ENCODE measurements at regions of chr19 and their contacts with region 1.

Region 1: GRCh38 chr19:55080968-55081772 is 5.5 kb downstream of the EPS8L1 start:
- DNase-seq: peak; percentile 70 to 96 (median 79)
- ATAC-seq: peak; percentile 93
- H3K4me3 ChIP-seq: peak overlapping the region; percentile 53
- H3K4me3 Mint-ChIP-seq: peak overlapping the region; percentile 78 to 92 (median 86)
- H3K27ac ChIP-seq: peak overlapping the region; percentile 2
- H3K27ac Mint-ChIP-seq: peak overlapping the region in 6 of 9 donors; percentile 56 to 96 (median 66)
- H3K4me1 ChIP-seq: peaks cover 10 to 15% of the 10 kb centered on the region in 2 donors
- H3K4me1 Mint-ChIP-seq: peaks cover 12 to 30% (median 20%) of the 10 kb centered on the region in 7 donors
- H3K27me3 ChIP-seq: peaks cover 0 to 12% of the 10 kb centered on the region in 2 donors
- H3K27me3 Mint-ChIP-seq: peaks cover 38 to 47% (median 46%) of the 10 kb centered on the region in 5 donors

Region 2: DNA sequence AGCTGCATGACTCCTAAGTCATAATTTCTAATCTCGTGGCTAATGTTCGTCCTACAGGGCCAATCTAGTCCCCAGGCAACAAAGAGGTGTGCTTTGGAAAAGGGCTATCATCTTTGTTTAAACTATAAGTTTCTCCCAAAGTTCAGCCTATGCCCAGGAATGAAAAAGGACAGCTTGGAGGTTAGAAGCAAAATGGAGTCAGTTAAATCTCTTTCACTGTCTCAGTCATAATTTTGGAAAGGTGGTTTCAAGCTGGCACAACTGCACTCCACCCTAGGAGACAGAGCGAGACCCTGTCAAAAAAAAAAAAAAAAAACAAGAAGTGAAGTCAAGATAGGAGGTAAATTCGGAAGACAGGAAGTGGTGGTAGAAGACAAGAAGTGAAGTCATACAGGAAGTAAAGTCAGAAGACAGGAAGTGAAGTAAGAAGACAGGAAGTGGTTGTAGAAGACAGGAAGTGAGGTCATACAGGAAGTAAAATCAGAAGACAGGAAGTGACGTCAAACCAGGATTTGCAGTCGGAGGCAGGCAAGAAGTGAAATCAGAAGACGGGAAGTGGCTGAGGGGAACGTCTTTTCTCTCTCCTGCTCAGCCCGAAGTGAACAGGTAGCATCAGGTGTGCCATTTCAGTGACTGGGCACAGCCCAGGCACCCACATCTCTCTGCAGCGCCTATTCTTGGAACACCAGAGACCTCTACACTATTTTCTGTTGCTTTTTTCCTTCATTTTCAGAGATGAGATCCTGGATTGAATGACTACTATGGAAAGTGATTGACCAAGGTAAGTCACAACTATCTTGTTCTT is 75.3 kb before region 1 on chr19:
- CTCF ChIA-PET with region 1: no interaction called
- POLR2A ChIA-PET with region 1: no interaction called
- intact Hi-C with region 1: loop called in 1 of 2 experiments (anchors 1 kb)
- DNase-seq: peak; percentile 26 to 92 (median 88)
- ATAC-seq: peak; percentile 92
- H3K4me3 ChIP-seq: peak overlapping the region; percentile 51
- H3K4me3 Mint-ChIP-seq: peak overlapping the region; percentile 75 to 92 (median 84)
- H3K27ac ChIP-seq: peak overlapping the region; percentile 75
- H3K27ac Mint-ChIP-seq: peak overlapping the region; percentile 86 to 98 (median 92)
- H3K4me1 ChIP-seq: peaks cover 0 to 8% of the 10 kb centered on the region in 2 donors
- H3K4me1 Mint-ChIP-seq: peaks cover 26 to 47% (median 40%) of the 10 kb centered on the region in 7 donors
- H3K27me3 ChIP-seq: peaks cover 0 to 3% of the 10 kb centered on the region in 2 donors
- H3K27me3 Mint-ChIP-seq: peaks cover 3 to 41% (median 35%) of the 10 kb centered on the region in 5 donors

Region 3: DNA sequence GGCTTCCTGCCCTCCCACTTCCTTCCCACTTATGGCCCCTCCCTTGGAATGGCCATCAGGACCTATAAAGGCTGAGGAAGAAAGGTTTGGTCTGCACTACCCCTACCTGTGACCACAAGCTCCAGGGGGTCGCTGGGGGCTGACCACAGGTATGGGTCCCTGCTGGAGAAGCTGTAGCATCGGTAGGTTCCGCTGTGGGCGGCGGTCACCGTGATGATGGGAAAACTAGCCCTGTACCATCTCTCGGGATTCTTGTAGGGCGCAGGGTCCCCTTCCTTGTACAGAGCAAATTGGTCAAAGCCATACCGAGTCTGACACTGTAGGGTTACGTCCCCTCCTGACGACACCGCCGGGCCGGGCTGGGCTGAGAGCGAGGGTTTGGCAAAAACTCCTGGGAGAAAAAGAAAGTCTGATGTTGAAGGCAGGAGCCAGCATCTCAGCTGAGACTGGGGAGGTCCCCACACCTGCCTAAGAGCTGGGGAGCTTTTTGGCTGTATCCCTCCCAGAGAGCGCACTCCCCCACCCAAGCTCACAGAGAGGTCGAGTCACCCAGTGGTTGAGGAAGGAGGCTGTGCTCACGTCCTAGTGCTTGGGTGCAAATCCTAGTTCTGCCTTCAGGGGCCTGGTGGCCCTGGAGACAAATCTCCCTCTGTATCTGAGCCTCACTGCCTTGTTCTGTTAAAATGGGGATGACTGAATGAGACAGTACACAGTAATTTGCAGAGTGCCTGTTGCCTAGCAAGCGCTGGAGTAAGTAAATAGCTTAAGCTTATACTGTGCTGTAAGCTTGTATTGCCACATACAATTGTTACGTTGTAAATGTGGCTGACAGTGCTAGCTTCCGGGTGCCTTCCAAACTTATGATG is 53.5 kb before region 1 on chr19:
- CTCF ChIA-PET with region 1: no interaction called
- POLR2A ChIA-PET with region 1: no interaction called
- intact Hi-C with region 1: no loop called
- DNase-seq: no peak
- ATAC-seq: peak; percentile 57
- H3K4me3 ChIP-seq: no peak overlapping the region
- H3K4me3 Mint-ChIP-seq: no peak overlapping the region
- H3K27ac ChIP-seq: peak overlapping the region; percentile 17
- H3K27ac Mint-ChIP-seq: peak overlapping the region in 5 of 9 donors; percentile 8 to 58 (median 38)
- H3K4me1 ChIP-seq: no peaks in the 10 kb centered on the region
- H3K4me1 Mint-ChIP-seq: peaks cover 0 to 25% (median 10%) of the 10 kb centered on the region in 7 donors
- H3K27me3 ChIP-seq: no peaks in the 10 kb centered on the region
- H3K27me3 Mint-ChIP-seq: no peaks in the 10 kb centered on the region

Region 4: GRCh38 chr19:55160128-55160985 is 79.2 kb after region 1 on chr19:
- CTCF ChIA-PET with region 1: no interaction called
- POLR2A ChIA-PET with region 1: no interaction called
- intact Hi-C with region 1: loop called in 1 of 2 experiments (anchors 5 kb)
- DNase-seq: peak; percentile 79 to 92 (median 85)
- ATAC-seq: peak; percentile 98
- H3K4me3 ChIP-seq: no peak overlapping the region
- H3K4me3 Mint-ChIP-seq: peak overlapping the region in 4 of 10 donors; percentile 21 to 66 (median 50)
- H3K27ac ChIP-seq: no peak overlapping the region
- H3K27ac Mint-ChIP-seq: peak overlapping the region in 3 of 9 donors; percentile 17 to 50 (median 18)
- H3K4me1 ChIP-seq: peaks cover 0 to 7% of the 10 kb centered on the region in 2 donors
- H3K4me1 Mint-ChIP-seq: peaks cover 0 to 16% (median 8%) of the 10 kb centered on the region in 7 donors
- H3K27me3 ChIP-seq: peaks cover 0 to 10% of the 10 kb centered on the region in 2 donors
- H3K27me3 Mint-ChIP-seq: peaks cover 25 to 56% (median 41%) of the 10 kb centered on the region in 5 donors